ENCODE measurements at regions of chr20 and their contacts with region 1.

Region 1: DNA sequence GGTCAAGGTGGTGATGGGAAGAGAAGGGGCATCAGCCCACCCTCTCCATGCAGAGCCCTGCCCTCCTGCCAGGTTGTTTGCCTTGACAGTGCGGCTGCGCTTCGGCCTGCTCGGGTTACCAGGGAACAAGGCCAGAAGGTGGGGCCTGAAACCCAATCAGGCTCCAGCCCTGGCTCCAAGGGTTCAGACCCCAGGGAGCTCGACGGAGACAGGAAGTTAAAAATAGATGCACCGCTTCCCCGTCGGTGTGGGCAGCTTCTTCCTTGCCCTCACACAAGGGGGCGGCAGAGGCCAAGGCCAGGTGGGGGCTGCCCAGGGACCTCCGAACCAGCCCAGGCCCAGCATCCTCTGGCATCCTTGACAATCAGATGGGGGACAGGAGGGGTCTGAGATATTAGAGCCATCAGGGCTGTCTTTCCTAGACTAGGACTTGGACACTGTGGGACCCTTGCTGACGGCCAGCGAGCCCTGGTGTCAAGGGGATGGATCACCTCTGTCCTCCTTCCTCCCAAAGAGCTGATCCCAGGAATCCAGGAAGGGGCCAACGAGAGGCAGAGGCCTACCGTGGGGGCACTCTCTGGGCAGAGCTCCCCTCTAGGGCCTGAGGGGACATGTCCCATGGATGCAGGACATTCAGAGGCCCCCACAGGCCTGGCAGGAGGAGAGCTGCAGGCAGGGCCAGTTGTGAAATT is 65.2 kb downstream of the RIPOR3 start:
- DNase-seq: peak in 1 of 2 experiments; percentile 94
- H3K4me3 ChIP-seq: no peak overlapping the region
- H3K27ac ChIP-seq: no peak overlapping the region
- H3K4me1 ChIP-seq: peaks cover 0 to 8% (median 3%) of the 10 kb centered on the region in 4 experiments; a peak in 4 of 7 replicates
- H3K27me3 ChIP-seq: no peaks in the 10 kb centered on the region
- CTCF ChIP-seq: peak; percentile 88 to 96 (median 90)
- EP300 ChIP-seq: no peak
- POLR2A ChIP-seq: no peak
- RAD21 ChIP-seq: peak; percentile 93

Region 2: DNA sequence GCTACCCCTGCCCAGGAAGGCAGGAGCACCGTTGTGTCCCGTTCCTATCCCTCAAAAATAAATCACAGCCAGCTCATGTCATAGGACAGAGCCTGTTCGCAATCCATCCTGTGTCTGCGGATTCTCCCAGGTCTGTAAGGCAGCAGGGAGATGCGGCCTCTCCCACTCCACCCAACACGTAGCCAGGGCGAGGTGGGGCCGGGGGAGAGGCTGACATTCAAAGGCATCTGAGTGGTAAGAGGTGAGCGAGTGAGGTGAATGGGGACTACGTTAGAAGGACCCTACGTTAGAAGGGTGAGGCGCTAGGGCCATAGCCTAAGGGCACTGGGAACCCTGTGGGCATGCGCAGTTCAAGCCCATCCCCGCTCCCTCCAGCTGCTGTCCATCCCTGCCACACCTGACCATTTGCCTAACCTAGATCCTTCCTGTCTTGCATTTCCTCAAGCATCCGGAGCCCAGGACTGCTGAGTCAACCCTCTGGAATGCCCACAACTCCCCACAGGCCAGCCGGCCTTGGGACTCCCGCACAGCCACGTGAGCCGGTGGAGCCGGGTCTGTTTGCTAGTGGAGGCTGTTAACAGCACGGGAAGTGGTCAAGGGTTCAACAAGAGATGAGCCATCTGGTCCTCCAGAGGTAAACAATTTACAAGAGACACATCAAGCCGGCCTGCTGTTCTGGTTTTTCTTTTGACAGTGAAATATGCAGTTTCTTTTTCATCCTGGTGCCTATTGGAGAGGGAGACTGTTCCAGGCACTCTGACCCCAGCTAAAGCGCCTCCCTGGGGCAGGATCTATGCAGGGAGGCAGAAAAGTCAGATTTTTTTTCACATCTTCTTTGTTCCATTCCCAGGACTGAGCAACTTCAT is 19.4 kb after region 1 on chr20:
- CTCF ChIA-PET with region 1: interaction called, 19 read pairs
- POLR2A ChIA-PET with region 1: interaction called, 4 read pairs
- DNase-seq: peak; percentile 77 to 85
- H3K4me3 ChIP-seq: no peak overlapping the region
- H3K27ac ChIP-seq: peak overlapping the region; percentile 64; the same call in 1 of the 2 replicates
- H3K4me1 ChIP-seq: peaks cover 4 to 12% (median 8%) of the 10 kb centered on the region in 4 experiments; a peak in 6 of 7 replicates
- H3K27me3 ChIP-seq: no peaks in the 10 kb centered on the region
- CTCF ChIP-seq: no peak
- EP300 ChIP-seq: no peak
- POLR2A ChIP-seq: peak in 1 of 2 experiments; percentile 32; a peak in 1 of 3 replicates
- RAD21 ChIP-seq: no peak

Region 3: GRCh38 chr20:50668326-50668725 is 42.2 kb after region 1 on chr20:
- CTCF ChIA-PET with region 1: interaction called, 49 read pairs
- POLR2A ChIA-PET with region 1: no interaction called
- DNase-seq: no peak
- H3K4me3 ChIP-seq: no peak overlapping the region
- H3K27ac ChIP-seq: no peak overlapping the region
- H3K4me1 ChIP-seq: peaks cover 0 to 3% (median 0%) of the 10 kb centered on the region in 4 experiments; a peak in 2 of 7 replicates
- H3K27me3 ChIP-seq: no peaks in the 10 kb centered on the region
- CTCF ChIP-seq: no peak
- EP300 ChIP-seq: no peak
- POLR2A ChIP-seq: no peak
- RAD21 ChIP-seq: no peak

Region 4: GRCh38 chr20:50724851-50725721 is 99.0 kb after region 1 on chr20:
- CTCF ChIA-PET with region 1: interaction called, 61 read pairs
- POLR2A ChIA-PET with region 1: no interaction called
- DNase-seq: no peak
- H3K4me3 ChIP-seq: no peak overlapping the region
- H3K27ac ChIP-seq: 0 out of 2 replicates have a peak overlapping the region, but pooled peaks have one; percentile 16
- H3K4me1 ChIP-seq: peaks cover 2 to 11% (median 9%) of the 10 kb centered on the region in 4 experiments; a peak in 5 of 7 replicates
- H3K27me3 ChIP-seq: no peaks in the 10 kb centered on the region
- CTCF ChIP-seq: no peak
- EP300 ChIP-seq: no peak
- POLR2A ChIP-seq: no peak
- RAD21 ChIP-seq: no peak

Region 5: GRCh38 chr20:50750145-50750671 is 124.1 kb after region 1 on chr20:
- CTCF ChIA-PET with region 1: interaction called, 41 read pairs
- POLR2A ChIA-PET with region 1: no interaction called
- DNase-seq: peak in 1 of 2 experiments; percentile 20
- H3K4me3 ChIP-seq: no peak overlapping the region
- H3K27ac ChIP-seq: no peak overlapping the region
- H3K4me1 ChIP-seq: no peaks in the 10 kb centered on the region
- H3K27me3 ChIP-seq: no peaks in the 10 kb centered on the region
- CTCF ChIP-seq: no peak
- EP300 ChIP-seq: no peak
- POLR2A ChIP-seq: no peak
- RAD21 ChIP-seq: no peak

Region 6: DNA sequence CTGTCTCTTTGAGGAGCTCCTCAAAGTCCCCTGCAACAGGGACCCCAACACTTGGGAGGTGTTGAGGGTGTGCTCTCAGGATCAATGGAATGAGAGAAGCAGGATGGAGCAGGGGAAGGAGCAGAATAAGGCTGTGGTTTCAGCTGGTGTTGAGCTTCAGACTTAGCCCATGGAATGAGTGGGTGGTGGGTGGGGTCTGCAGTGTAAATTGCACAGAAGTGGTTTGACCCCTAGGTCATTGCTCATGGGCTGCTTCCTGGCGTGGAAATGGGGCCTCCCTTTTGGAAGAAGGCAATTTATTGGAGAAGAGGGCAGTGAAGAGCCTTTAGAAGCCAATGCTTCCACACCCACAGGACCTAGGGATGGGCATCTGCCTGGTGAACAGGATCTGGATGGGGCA is 433.7 kb after region 1 on chr20:
- CTCF ChIA-PET with region 1: no interaction called
- POLR2A ChIA-PET with region 1: no interaction called
- DNase-seq: no peak
- H3K4me3 ChIP-seq: no peak overlapping the region
- H3K27ac ChIP-seq: no peak overlapping the region
- H3K4me1 ChIP-seq: no peaks in the 10 kb centered on the region
- H3K27me3 ChIP-seq: no peaks in the 10 kb centered on the region
- CTCF ChIP-seq: no peak
- EP300 ChIP-seq: no peak
- POLR2A ChIP-seq: no peak
- RAD21 ChIP-seq: no peak